ENCODE measurements at regions of chr2 and their contacts with region 1.

Region 1: GRCh38 chr2:75608684-75609333 is 37.8 kb upstream of the MRPL19 start:
- DNase-seq: peak in 1 of 2 donors; percentile 18
- ATAC-seq: peak; percentile 54 to 75
- H3K4me3 ChIP-seq: peak overlapping the region in 2 of 4 donors; percentile 4 to 13
- H3K27ac ChIP-seq: no peak overlapping the region
- H3K4me1 ChIP-seq: peaks cover 0 to 6% of the 10 kb centered on the region in 2 donors
- H3K27me3 ChIP-seq: peaks cover 5 to 17% (median 7%) of the 10 kb centered on the region in 3 donors
- CTCF ChIP-seq: peak; percentile 71 to 91 (median 79)
- POLR2A ChIP-seq: no peak

Region 2: GRCh38 chr2:75466708-75467311 is 142.0 kb before region 1 on chr2:
- in situ Hi-C with region 1: loop called in 2 of 4 experiments (anchors 10 to 25 kb)
- intact Hi-C with region 1: loop called (anchors 2 kb)
- DNase-seq: no peak
- ATAC-seq: no peak
- H3K4me3 ChIP-seq: no peak overlapping the region
- H3K27ac ChIP-seq: no peak overlapping the region
- H3K4me1 ChIP-seq: no peaks in the 10 kb centered on the region
- H3K27me3 ChIP-seq: no peaks in the 10 kb centered on the region
- CTCF ChIP-seq: peak in 1 of 5 experiments; percentile 31
- POLR2A ChIP-seq: no peak

Region 3: GRCh38 chr2:75527676-75528598 is 80.9 kb before region 1 on chr2:
- in situ Hi-C with region 1: no loop called
- intact Hi-C with region 1: no loop called
- DNase-seq: no peak
- ATAC-seq: no peak
- H3K4me3 ChIP-seq: no peak overlapping the region
- H3K27ac ChIP-seq: no peak overlapping the region
- H3K4me1 ChIP-seq: no peaks in the 10 kb centered on the region
- H3K27me3 ChIP-seq: no peaks in the 10 kb centered on the region
- CTCF ChIP-seq: no peak
- POLR2A ChIP-seq: no peak

Region 4: GRCh38 chr2:75928093-75928492 is 319.3 kb after region 1 on chr2:
- in situ Hi-C with region 1: no loop called
- intact Hi-C with region 1: no loop called
- DNase-seq: no peak
- ATAC-seq: no peak
- H3K4me3 ChIP-seq: no peak overlapping the region
- H3K27ac ChIP-seq: no peak overlapping the region
- H3K4me1 ChIP-seq: no peaks in the 10 kb centered on the region
- H3K27me3 ChIP-seq: no peaks in the 10 kb centered on the region
- CTCF ChIP-seq: no peak
- POLR2A ChIP-seq: no peak